ENCODE measurements at regions of chrX and their contacts with region 1.

Region 1: GRCh38 chrX:69538321-69538876 is 34.3 kb downstream of the NALF2 start:
- DNase-seq: peak in 1 of 2 donors; percentile 72
- H3K4me3 ChIP-seq: peak overlapping the region; percentile 42 to 64
- H3K27ac ChIP-seq: no peak overlapping the region
- H3K4me1 ChIP-seq: no peaks in the 10 kb centered on the region
- H3K27me3 ChIP-seq: no peaks in the 10 kb centered on the region
- CTCF ChIP-seq: peak; percentile 44 to 71 (median 60)

Region 2: GRCh38 chrX:69615779-69616456 is 77.5 kb after region 1 on chrX and contains the start of gene EDA:
- intact Hi-C with region 1: loop called (anchors 5 kb)
- DNase-seq: peak; percentile 27 to 89
- H3K4me3 ChIP-seq: peak within 1 kb of the TSS; percentile 55 to 89
- H3K27ac ChIP-seq: peak within 1 kb of the TSS in 1 of 2 donors; percentile 21
- H3K4me1 ChIP-seq: no peaks in the 10 kb centered on the region
- H3K27me3 ChIP-seq: no peaks in the 10 kb centered on the region
- CTCF ChIP-seq: no peak
- total RNA-seq, gene EDA: 1.7 TPM

Region 3: GRCh38 chrX:69630147-69630546 is 91.7 kb after region 1 on chrX:
- intact Hi-C with region 1: no loop called
- DNase-seq: no peak
- H3K4me3 ChIP-seq: no peak overlapping the region
- H3K27ac ChIP-seq: no peak overlapping the region
- H3K4me1 ChIP-seq: no peaks in the 10 kb centered on the region
- H3K27me3 ChIP-seq: no peaks in the 10 kb centered on the region
- CTCF ChIP-seq: no peak

Region 4: DNA sequence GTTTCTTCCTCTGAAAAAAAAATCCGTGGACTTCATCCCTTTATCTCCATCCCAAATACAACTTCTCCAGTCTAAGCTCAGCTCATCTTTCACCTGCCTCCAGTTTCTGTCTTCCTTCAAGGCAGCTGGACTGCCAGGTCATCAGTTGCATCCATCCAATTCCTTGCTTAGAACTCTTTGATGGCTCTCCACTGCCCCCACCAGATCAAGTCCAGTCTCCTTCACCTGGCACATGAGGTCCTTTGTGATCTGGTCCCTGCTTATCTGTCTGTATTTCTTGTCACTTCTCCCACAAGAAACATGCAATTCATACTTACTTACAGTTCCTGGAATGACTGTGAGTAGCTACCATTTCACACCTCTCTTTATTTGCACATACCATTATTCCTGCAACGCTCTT is 557.7 kb after region 1 on chrX:
- intact Hi-C with region 1: loop called (anchors 2 kb)
- DNase-seq: no peak
- H3K4me3 ChIP-seq: no peak overlapping the region
- H3K27ac ChIP-seq: no peak overlapping the region
- H3K4me1 ChIP-seq: no peaks in the 10 kb centered on the region
- H3K27me3 ChIP-seq: no peaks in the 10 kb centered on the region
- CTCF ChIP-seq: no peak

Measured in ascending aorta (tissue), 2 donors.